Calu3 (cell line): ENCODE measurements at regions of chr10 and their contacts with region 1.

Region 1: GRCh38 chr10:70540089-70540788 is 61.7 kb downstream of the PALD1 start:
- DNase-seq: peak; percentile 49
- H3K4me3 Mint-ChIP-seq: no peak overlapping the region
- H3K27ac Mint-ChIP-seq: no peak overlapping the region
- H3K4me1 Mint-ChIP-seq: no peaks in the 10 kb centered on the region
- H3K27me3 Mint-ChIP-seq: peaks cover 68% of the 10 kb centered on the region
- CTCF ChIP-seq: peak; percentile 71

Region 2: GRCh38 chr10:70461215-70461986 is 78.8 kb before region 1 on chr10:
- CTCF ChIA-PET with region 1: interaction called, 15 read pairs
- intact Hi-C with region 1: loop called (anchors 1 kb)
- DNase-seq: peak; percentile 68
- H3K4me3 Mint-ChIP-seq: no peak overlapping the region
- H3K27ac Mint-ChIP-seq: no peak overlapping the region
- H3K4me1 Mint-ChIP-seq: no peaks in the 10 kb centered on the region
- H3K27me3 Mint-ChIP-seq: peaks cover 76% of the 10 kb centered on the region
- CTCF ChIP-seq: peak; percentile 96